GM12878 (cell line): ENCODE measurements at regions of chr1 and their contacts with region 1.

Region 1: DNA sequence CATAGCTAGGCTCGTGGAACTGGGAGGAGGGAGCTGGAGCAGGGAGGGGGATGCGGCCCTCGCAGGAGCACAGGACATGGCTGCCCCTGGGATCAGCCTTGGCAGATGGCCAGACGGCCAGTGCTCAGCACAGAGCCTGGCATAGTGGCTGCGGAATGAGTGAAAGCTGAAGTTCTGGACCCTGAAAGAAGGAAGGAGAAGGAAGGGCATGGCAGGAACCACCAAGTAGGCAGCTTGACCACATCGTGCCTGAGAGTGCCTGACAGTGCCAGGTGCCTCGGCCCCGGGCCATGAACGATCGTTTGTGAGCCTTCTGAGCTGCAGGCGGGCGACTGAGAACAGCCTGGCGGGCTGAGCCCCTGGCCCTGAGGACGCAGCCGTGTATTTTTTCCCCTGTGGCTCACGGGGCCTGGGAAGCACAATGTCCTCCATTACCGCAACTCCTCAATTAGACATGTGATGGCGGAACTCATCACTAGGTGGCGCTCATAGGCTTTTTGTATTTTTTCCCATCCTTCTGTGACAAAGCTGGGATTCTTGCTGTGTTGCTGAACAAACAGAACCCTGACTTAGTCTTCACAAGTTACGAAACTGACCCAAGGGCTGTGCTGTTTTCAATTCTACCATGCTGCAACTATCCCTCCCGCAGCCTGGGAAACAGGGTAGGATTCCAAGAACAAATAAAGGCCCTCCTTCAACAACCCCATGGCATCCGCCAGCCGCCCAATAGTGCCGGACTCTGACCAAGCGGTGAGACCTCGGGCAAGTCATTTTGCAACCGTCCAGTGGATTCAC is 29.9 kb upstream of the TMEM61 start:
- DNase-seq: peak; percentile 27
- ATAC-seq: peak; percentile 74
- H3K4me3 ChIP-seq: no peak overlapping the region
- H3K27ac ChIP-seq: no peak overlapping the region
- H3K4me1 ChIP-seq: no peaks in the 10 kb centered on the region
- H3K27me3 ChIP-seq: no peaks in the 10 kb centered on the region
- CTCF ChIP-seq: peak; percentile 55 to 63 (median 58); a peak in 5 of 6 replicates
- EP300 ChIP-seq: no peak
- POLR2A ChIP-seq: no peak
- RAD21 ChIP-seq: peak; percentile 80

Region 2: DNA sequence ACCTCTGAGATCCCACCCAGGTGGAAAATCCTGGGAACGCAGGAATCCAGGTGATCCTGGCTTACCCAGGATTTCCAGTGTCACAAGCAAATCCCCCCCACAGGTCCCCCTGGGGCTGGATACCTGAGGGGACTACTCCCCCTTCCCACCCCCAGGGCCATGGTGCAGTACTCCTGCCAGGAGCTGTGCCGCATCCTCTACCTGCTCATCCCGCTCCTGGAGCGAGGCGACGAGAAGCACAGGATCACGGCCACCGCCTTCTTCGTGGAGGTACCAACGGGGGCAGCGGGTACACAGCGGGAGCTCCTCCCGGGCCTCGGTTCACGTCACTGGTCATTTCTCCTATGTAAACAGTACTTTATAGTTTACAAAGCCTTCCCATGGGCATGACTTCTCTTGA is 255.3 kb before region 1 on chr1:
- CTCF ChIA-PET with region 1: no interaction called
- POLR2A ChIA-PET with region 1: no interaction called
- RAD21 ChIA-PET with region 1: no interaction called
- SMC1A ChIA-PET with region 1: no interaction called
- in situ Hi-C with region 1: no loop called
- intact Hi-C with region 1: no loop called
- DNase-seq: no peak
- ATAC-seq: no peak
- H3K4me3 ChIP-seq: no peak overlapping the region
- H3K27ac ChIP-seq: no peak overlapping the region
- H3K4me1 ChIP-seq: no peaks in the 10 kb centered on the region
- H3K27me3 ChIP-seq: peaks cover 2 to 3% of the 10 kb centered on the region in 2 experiments; a peak in 3 of 4 replicates
- CTCF ChIP-seq: no peak
- EP300 ChIP-seq: no peak
- POLR2A ChIP-seq: no peak
- RAD21 ChIP-seq: no peak

Region 3: DNA sequence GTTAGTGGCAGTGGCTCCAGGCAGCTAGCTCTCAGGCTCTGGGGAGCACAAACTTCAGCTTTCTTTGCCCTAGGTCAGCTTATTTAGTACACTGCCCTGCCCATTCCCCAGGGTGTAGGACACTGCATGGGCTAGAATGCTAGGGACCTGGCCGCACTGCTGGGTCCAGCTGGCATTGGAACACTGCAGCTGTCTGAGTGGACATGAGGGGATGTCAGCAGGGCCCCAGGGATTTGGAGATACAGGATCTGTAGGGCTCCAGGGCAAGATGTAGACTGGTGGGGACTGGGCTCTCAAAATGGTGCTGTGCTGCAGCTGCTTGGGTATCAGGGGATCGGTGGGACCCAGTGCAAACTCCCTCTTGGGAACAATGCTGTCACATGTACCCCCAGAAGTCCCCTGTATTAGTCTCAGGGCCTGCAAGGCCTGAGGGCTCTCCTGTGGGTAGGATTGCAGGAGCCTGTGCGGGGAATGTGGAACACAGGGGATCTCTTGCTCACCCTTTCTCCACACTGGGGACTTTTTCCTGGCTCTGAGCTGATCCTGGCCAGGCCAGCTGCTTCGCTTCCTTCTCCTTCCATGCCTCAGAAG is 124.2 kb before region 1 on chr1:
- CTCF ChIA-PET with region 1: no interaction called
- POLR2A ChIA-PET with region 1: no interaction called
- RAD21 ChIA-PET with region 1: no interaction called
- SMC1A ChIA-PET with region 1: no interaction called
- in situ Hi-C with region 1: no loop called
- intact Hi-C with region 1: no loop called
- DNase-seq: no peak
- ATAC-seq: no peak
- H3K4me3 ChIP-seq: no peak overlapping the region
- H3K27ac ChIP-seq: no peak overlapping the region
- H3K4me1 ChIP-seq: no peaks in the 10 kb centered on the region
- H3K27me3 ChIP-seq: no peaks in the 10 kb centered on the region
- CTCF ChIP-seq: no peak
- EP300 ChIP-seq: no peak
- POLR2A ChIP-seq: no peak
- RAD21 ChIP-seq: no peak

Region 4: GRCh38 chr1:54865238-54866073 is 85.1 kb before region 1 on chr1:
- CTCF ChIA-PET with region 1: no interaction called
- POLR2A ChIA-PET with region 1: no interaction called
- RAD21 ChIA-PET with region 1: no interaction called
- SMC1A ChIA-PET with region 1: no interaction called
- in situ Hi-C with region 1: no loop called
- intact Hi-C with region 1: no loop called
- DNase-seq: no peak
- ATAC-seq: no peak
- H3K4me3 ChIP-seq: no peak overlapping the region
- H3K27ac ChIP-seq: no peak overlapping the region
- H3K4me1 ChIP-seq: peaks cover 9% of the 10 kb centered on the region
- H3K27me3 ChIP-seq: no peaks in the 10 kb centered on the region
- CTCF ChIP-seq: no peak
- EP300 ChIP-seq: no peak
- POLR2A ChIP-seq: no peak
- RAD21 ChIP-seq: no peak

Region 5: GRCh38 chr1:54965624-54966340 is 15.2 kb after region 1 on chr1:
- CTCF ChIA-PET with region 1: interaction called, 43 read pairs
- POLR2A ChIA-PET with region 1: no interaction called
- RAD21 ChIA-PET with region 1: interaction called, 7 read pairs
- SMC1A ChIA-PET with region 1: interaction called, 16 read pairs
- in situ Hi-C with region 1: no loop called
- intact Hi-C with region 1: no loop called
- DNase-seq: peak; percentile 60
- ATAC-seq: peak; percentile 97
- H3K4me3 ChIP-seq: no peak overlapping the region
- H3K27ac ChIP-seq: peak overlapping the region; percentile 34; the same call in 1 of the 2 replicates
- H3K4me1 ChIP-seq: peaks cover 13% of the 10 kb centered on the region
- H3K27me3 ChIP-seq: no peaks in the 10 kb centered on the region
- CTCF ChIP-seq: no peak
- EP300 ChIP-seq: no peak
- POLR2A ChIP-seq: no peak
- RAD21 ChIP-seq: no peak

Region 6: DNA sequence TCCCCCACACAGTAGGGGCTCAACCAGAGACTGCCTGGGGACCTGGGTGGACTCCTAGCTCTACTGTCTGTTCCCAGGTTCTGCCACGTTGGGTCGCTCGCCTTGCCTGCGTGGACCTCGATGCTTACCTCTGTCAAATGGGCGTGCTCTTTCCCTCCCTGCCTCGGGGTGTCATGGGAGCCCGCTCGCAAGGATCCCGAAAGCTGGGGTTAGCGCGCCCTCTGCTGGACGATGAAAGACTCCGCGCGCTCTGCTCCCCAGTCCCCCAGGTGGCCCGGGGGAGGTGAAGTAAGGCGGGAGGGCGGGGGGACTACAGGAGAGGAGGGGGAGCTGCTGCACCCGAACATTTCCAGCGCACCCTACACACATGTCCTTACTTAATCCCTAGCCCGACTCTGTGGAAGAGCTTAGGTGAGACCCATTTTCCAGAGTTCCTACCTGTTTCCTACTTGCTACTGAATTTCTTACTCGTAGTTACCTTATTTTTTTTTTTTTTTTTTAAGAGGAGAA is 45.8 kb after region 1 on chr1:
- CTCF ChIA-PET with region 1: interaction called, 436 read pairs
- POLR2A ChIA-PET with region 1: no interaction called
- RAD21 ChIA-PET with region 1: interaction called, 156 read pairs
- SMC1A ChIA-PET with region 1: interaction called, 147 read pairs
- in situ Hi-C with region 1: loop called (anchors 5 kb)
- intact Hi-C with region 1: loop called (anchors 1 kb)
- DNase-seq: no peak
- ATAC-seq: peak; percentile 97
- H3K4me3 ChIP-seq: no peak overlapping the region
- H3K27ac ChIP-seq: no peak overlapping the region
- H3K4me1 ChIP-seq: peaks cover 3% of the 10 kb centered on the region; the same call in 1 of the 2 replicates
- H3K27me3 ChIP-seq: peaks cover 2 to 5% of the 10 kb centered on the region in 2 experiments
- CTCF ChIP-seq: peak; percentile 59 to 88 (median 87)
- EP300 ChIP-seq: no peak
- POLR2A ChIP-seq: no peak
- RAD21 ChIP-seq: peak; percentile 97

Region 7: GRCh38 chr1:55021965-55022546 is 71.5 kb after region 1 on chr1:
- CTCF ChIA-PET with region 1: interaction called, 218 read pairs
- POLR2A ChIA-PET with region 1: no interaction called
- RAD21 ChIA-PET with region 1: interaction called, 10 read pairs
- SMC1A ChIA-PET with region 1: interaction called, 37 read pairs
- in situ Hi-C with region 1: no loop called
- intact Hi-C with region 1: loop called (anchors 1 kb)
- DNase-seq: peak; percentile 1
- ATAC-seq: peak; percentile 100
- H3K4me3 ChIP-seq: no peak overlapping the region
- H3K27ac ChIP-seq: no peak overlapping the region
- H3K4me1 ChIP-seq: no peaks in the 10 kb centered on the region
- H3K27me3 ChIP-seq: no peaks in the 10 kb centered on the region
- CTCF ChIP-seq: peak; percentile 90 to 94 (median 91)
- EP300 ChIP-seq: no peak
- POLR2A ChIP-seq: no peak
- RAD21 ChIP-seq: peak; percentile 67